ENCODE measurements at regions of chr10 and their contacts with region 1.

Region 1: GRCh38 chr10:71860243-71861029 is 9.4 kb upstream of the PSAP start:
- DNase-seq: peak; percentile 97
- ATAC-seq: peak; percentile 97
- H3K4me3 ChIP-seq: peak overlapping the region in 1 of 2 experiments; percentile 24; a peak in 2 of 4 replicates
- H3K27ac ChIP-seq: peak overlapping the region; percentile 98
- H3K4me1 ChIP-seq: peaks cover 60% of the 10 kb centered on the region
- H3K27me3 ChIP-seq: no peaks in the 10 kb centered on the region
- CTCF ChIP-seq: no peak

Region 2: DNA sequence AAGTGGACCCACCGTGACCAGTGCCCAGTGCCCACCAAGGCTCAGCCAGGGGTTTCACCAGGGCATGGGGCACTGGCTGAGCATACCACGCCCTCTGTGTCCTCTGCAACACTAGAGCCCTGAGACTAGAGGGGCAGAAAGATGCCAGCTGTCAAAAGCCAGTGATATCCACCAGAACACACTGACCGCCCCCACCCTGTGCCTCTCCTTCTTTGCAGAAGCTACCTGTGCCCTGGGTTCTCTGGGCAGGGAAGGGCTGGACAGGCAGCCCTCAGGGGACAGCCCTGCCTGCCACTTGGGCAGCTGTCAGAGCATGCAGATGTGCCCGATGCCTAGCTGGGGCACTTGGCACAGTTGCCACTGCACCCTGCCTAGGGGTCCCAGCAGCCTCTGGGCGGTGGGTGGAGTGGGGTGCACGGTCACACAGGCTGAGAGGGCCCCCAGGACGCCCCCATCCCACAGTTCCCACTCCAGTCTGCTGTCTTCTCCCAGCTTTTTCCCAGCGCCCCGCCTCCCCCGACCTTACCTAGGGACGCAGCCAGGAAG is 87.5 kb before region 1 on chr10:
- CTCF ChIA-PET with region 1: interaction called, 13 read pairs
- POLR2A ChIA-PET with region 1: no interaction called
- in situ Hi-C with region 1: no loop called
- intact Hi-C with region 1: no loop called
- DNase-seq: no peak
- ATAC-seq: peak; percentile 66
- H3K4me3 ChIP-seq: peak overlapping the region; percentile 60 to 64
- H3K27ac ChIP-seq: peak overlapping the region; percentile 68
- H3K4me1 ChIP-seq: peaks cover 56% of the 10 kb centered on the region
- H3K27me3 ChIP-seq: no peaks in the 10 kb centered on the region
- CTCF ChIP-seq: no peak

Region 3: GRCh38 chr10:72097448-72098300 is 237.2 kb after region 1 on chr10:
- CTCF ChIA-PET with region 1: no interaction called
- POLR2A ChIA-PET with region 1: no interaction called
- in situ Hi-C with region 1: no loop called
- intact Hi-C with region 1: no loop called
- DNase-seq: peak; percentile 94
- ATAC-seq: peak; percentile 93
- H3K4me3 ChIP-seq: no peak overlapping the region
- H3K27ac ChIP-seq: peak overlapping the region; percentile 79
- H3K4me1 ChIP-seq: peaks cover 40% of the 10 kb centered on the region
- H3K27me3 ChIP-seq: no peaks in the 10 kb centered on the region
- CTCF ChIP-seq: no peak

Measured in Panc1 (cell line).